Natural killer cell (primary cell): ENCODE measurements at regions of chr7 and their contacts with region 1.

Region 1: GRCh38 chr7:150420987-150421674 is 29.3 kb upstream of the GIMAP8 start:
- DNase-seq: peak; percentile 81 to 92
- ATAC-seq: peak; percentile 94 to 100 (median 100)
- H3K4me3 ChIP-seq: no peak overlapping the region
- H3K4me3 Mint-ChIP-seq: peak overlapping the region; percentile 18
- H3K27ac ChIP-seq: no peak overlapping the region
- H3K27ac Mint-ChIP-seq: peak overlapping the region in 1 of 2 donors; percentile 14
- H3K4me1 ChIP-seq: no peaks in the 10 kb centered on the region
- H3K4me1 Mint-ChIP-seq: peaks cover 7 to 8% of the 10 kb centered on the region in 2 donors
- H3K27me3 ChIP-seq: no peaks in the 10 kb centered on the region
- H3K27me3 Mint-ChIP-seq: peaks cover 0 to 7% of the 10 kb centered on the region in 2 donors
- CTCF ChIP-seq: peak; percentile 94

Region 2: GRCh38 chr7:150356265-150356897 is 64.8 kb before region 1 on chr7:
- intact Hi-C with region 1: loop called (anchors 1 kb)
- DNase-seq: peak in 1 of 2 donors; percentile 80
- ATAC-seq: peak in 1 of 3 donors; percentile 31
- H3K4me3 ChIP-seq: no peak overlapping the region
- H3K4me3 Mint-ChIP-seq: no peak overlapping the region
- H3K27ac ChIP-seq: no peak overlapping the region
- H3K27ac Mint-ChIP-seq: no peak overlapping the region
- H3K4me1 ChIP-seq: peaks cover 22% of the 10 kb centered on the region
- H3K4me1 Mint-ChIP-seq: peaks cover 33% of the 10 kb centered on the region in 2 donors
- H3K27me3 ChIP-seq: no peaks in the 10 kb centered on the region
- H3K27me3 Mint-ChIP-seq: peaks cover 0 to 5% of the 10 kb centered on the region in 2 donors
- CTCF ChIP-seq: peak; percentile 82